Heart left ventricle (tissue), 16 donors: ENCODE measurements at regions of chrX and their contacts with region 1.

Region 1: GRCh38 chrX:40647307-40648197 is at the start of gene CXorf38:
- DNase-seq: peak; percentile 88 to 95 (median 94)
- ATAC-seq: peak; percentile 76 to 93 (median 88)
- H3K4me3 ChIP-seq: peak within 1 kb of the TSS; percentile 70 to 98 (median 83)
- H3K27ac ChIP-seq: peak within 1 kb of the TSS; percentile 57 to 88 (median 84)
- H3K4me1 ChIP-seq: peaks cover 0 to 44% (median 18%) of the 10 kb centered on the region in 12 donors
- H3K27me3 ChIP-seq: peaks cover 0 to 3% (median 0%) of the 10 kb centered on the region in 9 donors
- CTCF ChIP-seq: no peak
- POLR2A ChIP-seq: peak in 1 of 2 donors; percentile 71
- total RNA-seq, gene CXorf38: 3.3 to 16.0 (median 6.0) TPM

Region 2: GRCh38 chrX:40580537-40581335 is 66.8 kb before region 1 on chrX and contains the start of gene ATP6AP2:
- intact Hi-C with region 1: loop called in 1 of 10 experiments (anchors 10 kb)
- DNase-seq: peak; percentile 90 to 94 (median 94)
- ATAC-seq: peak; percentile 98 to 99 (median 99)
- H3K4me3 ChIP-seq: peak within 1 kb of the TSS; percentile 38 to 94 (median 78)
- H3K27ac ChIP-seq: peak within 1 kb of the TSS; percentile 53 to 92 (median 86)
- H3K4me1 ChIP-seq: peaks cover 0 to 25% (median 3%) of the 10 kb centered on the region in 12 donors
- H3K27me3 ChIP-seq: peaks cover 0 to 47% (median 0%) of the 10 kb centered on the region in 9 donors
- CTCF ChIP-seq: no peak
- POLR2A ChIP-seq: peak; percentile 34 to 80
- total RNA-seq, gene ATP6AP2: 35.8 to 93.6 (median 51.0) TPM

Region 3: DNA sequence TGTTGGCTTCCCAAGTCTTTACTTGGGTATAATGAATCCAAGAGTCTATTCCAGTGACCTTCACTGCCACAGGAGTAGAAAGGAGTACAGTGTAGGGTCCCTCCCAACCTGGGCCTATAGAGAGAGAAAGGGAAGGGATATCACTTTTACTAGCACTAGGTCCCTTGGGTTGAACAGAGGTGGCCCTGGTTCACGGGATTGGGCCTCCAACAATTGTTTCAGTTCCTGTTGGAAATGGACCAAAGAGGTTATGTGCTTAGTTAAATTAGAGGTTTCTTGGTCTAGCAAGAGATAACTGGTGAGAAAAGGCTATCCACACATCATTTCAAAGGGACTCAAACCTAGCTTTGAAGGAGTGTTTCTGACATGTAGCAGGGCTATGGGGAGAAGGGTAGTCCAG is 144.9 kb after region 1 on chrX:
- intact Hi-C with region 1: loop called in 6 of 10 experiments (anchors 5 kb)
- DNase-seq: no peak
- ATAC-seq: no peak
- H3K4me3 ChIP-seq: no peak overlapping the region
- H3K27ac ChIP-seq: no peak overlapping the region
- H3K4me1 ChIP-seq: peaks cover 0 to 9% (median 0%) of the 10 kb centered on the region in 12 donors
- H3K27me3 ChIP-seq: peaks cover 0 to 51% (median 0%) of the 10 kb centered on the region in 9 donors
- CTCF ChIP-seq: no peak
- POLR2A ChIP-seq: no peak

Region 4: GRCh38 chrX:40845331-40845911 is 197.9 kb after region 1 on chrX:
- intact Hi-C with region 1: no loop called
- DNase-seq: peak in 4 of 5 donors; percentile 25 to 43 (median 34)
- ATAC-seq: peak in 3 of 4 donors; percentile 42 to 79 (median 61)
- H3K4me3 ChIP-seq: no peak overlapping the region
- H3K27ac ChIP-seq: peak overlapping the region in 5 of 12 donors; percentile 9 to 39 (median 23)
- H3K4me1 ChIP-seq: peaks cover 0 to 13% (median 0%) of the 10 kb centered on the region in 12 donors
- H3K27me3 ChIP-seq: peaks cover 0 to 11% (median 0%) of the 10 kb centered on the region in 9 donors
- CTCF ChIP-seq: no peak
- POLR2A ChIP-seq: no peak

Region 5: DNA sequence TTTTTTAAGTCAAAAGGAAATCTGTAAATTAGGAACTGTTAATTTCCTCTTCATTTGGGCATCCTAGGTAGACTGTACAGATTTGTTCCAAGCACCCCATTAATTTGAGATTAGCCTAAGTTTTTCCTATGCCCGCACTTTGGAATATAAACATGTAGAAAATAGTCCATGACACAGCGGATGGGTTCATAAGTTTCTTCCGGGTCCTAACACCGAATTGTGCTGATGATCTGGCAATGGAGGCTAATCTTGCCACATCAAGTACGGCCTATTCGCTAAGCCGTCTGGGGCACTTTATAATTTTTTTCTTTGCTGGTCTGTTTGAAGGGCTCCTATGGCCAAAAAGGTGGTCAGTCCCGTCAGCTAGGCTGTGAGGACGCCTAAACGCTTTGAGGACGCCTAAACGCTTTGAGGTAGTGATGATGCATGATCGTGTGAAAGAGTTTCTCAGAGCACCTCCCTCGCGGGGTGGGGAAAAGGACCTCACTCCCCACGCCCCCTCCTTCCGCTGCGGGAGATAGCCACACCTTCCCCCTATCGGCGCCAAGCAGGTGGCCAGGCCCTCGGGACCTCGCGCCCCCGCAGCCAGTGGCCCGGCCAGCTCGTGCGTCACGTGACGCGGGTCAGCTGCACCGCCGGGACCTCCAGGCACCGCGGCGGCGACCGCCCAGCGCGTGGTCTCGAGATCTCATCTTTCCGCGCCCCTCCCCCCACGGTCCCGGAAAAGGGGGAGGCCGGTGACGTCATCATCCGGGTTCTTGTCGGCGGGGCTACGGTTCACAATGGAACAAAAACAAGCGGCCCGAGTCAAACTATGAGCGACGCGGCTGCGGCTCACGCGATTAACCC is 436.7 kb after region 1 on chrX:
- intact Hi-C with region 1: loop called in 1 of 10 experiments (anchors 10 kb)
- DNase-seq: peak; percentile 95 to 99 (median 96)
- ATAC-seq: peak; percentile 85 to 89 (median 88)
- H3K4me3 ChIP-seq: peak overlapping the region; percentile 52 to 99 (median 90)
- H3K27ac ChIP-seq: peak overlapping the region; percentile 90 to 100 (median 99)
- H3K4me1 ChIP-seq: peaks cover 0 to 35% (median 13%) of the 10 kb centered on the region in 12 donors
- H3K27me3 ChIP-seq: peaks cover 0 to 6% (median 0%) of the 10 kb centered on the region in 9 donors
- CTCF ChIP-seq: no peak
- POLR2A ChIP-seq: peak in 1 of 2 donors; percentile 76

Region 6: DNA sequence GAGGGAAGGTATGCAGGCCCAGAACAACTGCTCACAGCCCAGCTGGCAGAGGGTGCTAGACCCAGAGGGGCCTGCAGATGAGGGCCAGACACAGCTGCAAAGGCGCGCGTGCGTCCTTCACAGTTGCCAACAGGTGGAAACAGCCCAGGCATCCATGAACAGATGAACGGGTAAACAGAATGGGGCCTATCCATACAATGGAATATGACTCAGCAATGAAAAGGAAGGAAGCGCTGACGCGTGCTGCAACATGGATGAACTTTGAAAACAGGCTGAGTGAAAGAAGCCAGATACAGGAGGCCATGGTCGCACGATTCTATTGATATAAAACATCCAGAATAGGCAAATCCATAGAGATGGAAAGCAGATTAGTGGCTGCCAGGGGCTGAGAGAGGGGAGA is 603.3 kb after region 1 on chrX:
- intact Hi-C with region 1: loop called in 1 of 10 experiments (anchors 5 kb)
- DNase-seq: no peak
- ATAC-seq: no peak
- H3K4me3 ChIP-seq: no peak overlapping the region
- H3K27ac ChIP-seq: no peak overlapping the region
- H3K4me1 ChIP-seq: peaks cover 0 to 15% (median 0%) of the 10 kb centered on the region in 12 donors
- H3K27me3 ChIP-seq: peaks cover 0 to 21% (median 0%) of the 10 kb centered on the region in 9 donors
- CTCF ChIP-seq: no peak
- POLR2A ChIP-seq: no peak